CD4-positive, alpha-beta memory T cell (primary cell): ENCODE measurements at regions of chr16 and their contacts with region 1.

Region 1: DNA sequence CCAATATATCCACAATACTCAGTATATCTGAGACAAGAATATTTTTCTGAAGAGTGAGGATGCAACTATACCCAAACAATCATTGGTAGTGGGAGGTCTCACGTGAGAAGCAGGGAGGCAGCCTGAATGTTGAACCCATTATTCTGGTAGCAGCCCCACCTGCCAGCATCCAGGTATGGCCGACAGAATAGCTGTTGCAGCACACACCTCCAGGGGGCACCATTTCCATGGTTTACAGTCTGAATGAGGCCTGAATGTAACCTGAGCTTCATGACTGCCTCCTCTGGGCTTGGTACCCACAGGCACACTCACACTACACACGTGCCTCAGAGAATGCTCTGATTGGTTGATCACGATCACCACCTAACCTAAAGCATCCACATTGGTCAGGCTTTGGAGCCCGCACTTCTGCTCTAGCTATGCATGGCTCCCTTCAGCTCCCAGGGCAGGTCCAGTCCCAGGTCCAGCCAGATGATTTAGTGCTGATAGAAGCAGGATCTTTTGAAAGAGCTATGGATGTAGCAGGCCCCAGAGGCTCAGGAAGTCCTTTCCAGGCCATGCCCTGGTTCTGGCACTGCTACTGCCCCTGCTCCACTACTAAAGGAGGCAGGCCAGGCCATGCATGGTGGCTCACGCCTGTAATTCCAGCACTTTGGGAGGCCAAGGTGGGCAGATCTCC is 11.0 kb upstream of the CBFB start:
- DNase-seq: peak; percentile 82 to 88 (median 86)
- H3K4me3 ChIP-seq: no peak overlapping the region
- H3K4me3 Mint-ChIP-seq: peak overlapping the region in 2 of 8 donors; percentile 3 to 21
- H3K27ac ChIP-seq: no peak overlapping the region
- H3K27ac Mint-ChIP-seq: peak overlapping the region in 4 of 7 donors; percentile 24 to 77 (median 56)
- H3K4me1 ChIP-seq: peaks cover 13% of the 10 kb centered on the region
- H3K4me1 Mint-ChIP-seq: peaks cover 2 to 19% (median 8%) of the 10 kb centered on the region in 4 donors
- H3K27me3 ChIP-seq: no peaks in the 10 kb centered on the region
- H3K27me3 Mint-ChIP-seq: no peaks in the 10 kb centered on the region

Region 2: DNA sequence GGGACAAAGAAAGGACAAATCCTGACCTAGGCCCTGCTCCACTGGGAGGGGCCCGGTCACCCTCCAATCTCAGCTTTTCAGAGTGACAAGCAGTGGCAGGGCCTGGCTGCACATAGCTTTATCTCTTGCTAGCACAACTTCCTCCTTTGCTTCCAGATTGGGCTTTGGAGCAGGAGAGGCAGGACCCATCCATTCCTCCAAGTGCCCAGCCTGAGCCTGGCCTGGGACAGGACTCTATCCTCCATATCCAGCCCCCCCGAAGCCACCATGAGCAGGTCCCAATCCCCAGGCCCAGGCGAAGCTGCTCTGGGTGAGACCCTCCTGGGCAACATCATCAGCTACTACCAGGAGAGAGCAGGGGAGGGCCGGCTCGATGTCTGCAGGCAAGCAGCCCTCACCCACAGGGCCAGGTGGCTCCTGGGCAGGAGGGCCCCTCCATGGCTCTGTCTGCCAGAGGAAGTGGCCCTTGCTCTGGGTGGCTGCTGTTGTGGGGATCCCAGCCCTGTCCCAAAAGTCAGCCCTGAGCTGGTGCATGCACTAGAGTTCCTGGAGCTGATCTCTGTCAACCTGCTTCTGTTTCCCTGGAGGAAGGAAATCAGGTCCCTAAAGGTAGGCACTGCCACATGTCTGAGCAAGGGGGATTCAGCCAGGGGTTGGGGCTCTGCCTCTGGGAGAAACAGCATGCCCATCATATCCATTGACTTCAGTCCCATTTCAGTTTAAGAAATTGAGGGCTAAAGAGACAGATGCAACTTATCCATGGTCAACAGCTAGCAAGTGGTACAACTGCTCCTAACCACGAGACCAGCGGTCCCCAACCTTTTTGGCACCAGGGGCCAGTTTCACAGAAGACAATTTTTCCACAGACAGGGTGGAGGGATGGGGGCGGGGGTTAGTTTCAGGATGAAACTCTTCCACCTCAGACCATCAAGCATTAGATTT is 526.9 kb before region 1 on chr16:
- CTCF ChIA-PET with region 1: no interaction called
- POLR2A ChIA-PET with region 1: no interaction called
- intact Hi-C with region 1: no loop called
- DNase-seq: no peak
- H3K4me3 ChIP-seq: no peak overlapping the region
- H3K4me3 Mint-ChIP-seq: peak overlapping the region in 1 of 8 donors; percentile 36
- H3K27ac ChIP-seq: no peak overlapping the region
- H3K27ac Mint-ChIP-seq: peak overlapping the region in 3 of 7 donors; percentile 2 to 30 (median 18)
- H3K4me1 ChIP-seq: no peaks in the 10 kb centered on the region
- H3K4me1 Mint-ChIP-seq: peaks cover 0 to 2% (median 0%) of the 10 kb centered on the region in 4 donors
- H3K27me3 ChIP-seq: no peaks in the 10 kb centered on the region
- H3K27me3 Mint-ChIP-seq: peaks cover 0 to 2% of the 10 kb centered on the region in 2 donors

Region 3: DNA sequence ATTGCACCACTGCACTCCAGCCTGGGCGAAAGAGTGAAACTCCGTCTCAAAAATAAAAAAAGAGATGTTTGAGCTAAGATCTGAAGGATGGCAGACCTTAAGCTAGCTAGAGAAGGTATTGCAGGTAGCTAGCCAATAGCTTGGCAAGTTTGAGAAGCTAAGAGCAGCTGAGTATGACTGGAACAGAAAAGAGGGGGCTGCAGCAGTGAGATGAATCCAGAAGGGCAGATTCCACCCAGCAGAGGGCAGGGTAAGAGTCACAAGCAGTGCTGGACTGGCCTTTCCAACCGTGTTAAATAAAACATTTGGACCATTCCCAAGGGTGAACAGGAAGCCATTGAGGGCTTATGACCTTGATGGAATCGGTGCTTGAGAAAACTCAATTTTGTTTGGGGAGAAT is 86.1 kb after region 1 on chr16:
- CTCF ChIA-PET with region 1: interaction called, 72 read pairs
- POLR2A ChIA-PET with region 1: interaction called, 4 read pairs
- intact Hi-C with region 1: loop called (anchors 1 kb)
- DNase-seq: no peak
- H3K4me3 ChIP-seq: no peak overlapping the region
- H3K4me3 Mint-ChIP-seq: no peak overlapping the region
- H3K27ac ChIP-seq: no peak overlapping the region
- H3K27ac Mint-ChIP-seq: peak overlapping the region in 3 of 7 donors; percentile 7 to 47 (median 19)
- H3K4me1 ChIP-seq: peaks cover 3% of the 10 kb centered on the region
- H3K4me1 Mint-ChIP-seq: peaks cover 0 to 6% (median 0%) of the 10 kb centered on the region in 4 donors
- H3K27me3 ChIP-seq: no peaks in the 10 kb centered on the region
- H3K27me3 Mint-ChIP-seq: no peaks in the 10 kb centered on the region

Region 4: GRCh38 chr16:67173808-67174705 is 156.1 kb after region 1 on chr16:
- CTCF ChIA-PET with region 1: interaction called, 14 read pairs
- POLR2A ChIA-PET with region 1: no interaction called
- intact Hi-C with region 1: no loop called
- DNase-seq: peak; percentile 61 to 78 (median 64)
- H3K4me3 ChIP-seq: peak overlapping the region; percentile 29 to 68
- H3K4me3 Mint-ChIP-seq: peak overlapping the region; percentile 81 to 95 (median 88)
- H3K27ac ChIP-seq: peak overlapping the region; percentile 20
- H3K27ac Mint-ChIP-seq: peak overlapping the region; percentile 61 to 96 (median 78)
- H3K4me1 ChIP-seq: peaks cover 49% of the 10 kb centered on the region
- H3K4me1 Mint-ChIP-seq: peaks cover 26 to 66% (median 37%) of the 10 kb centered on the region in 4 donors
- H3K27me3 ChIP-seq: peaks cover 14% of the 10 kb centered on the region
- H3K27me3 Mint-ChIP-seq: peaks cover 5 to 18% of the 10 kb centered on the region in 2 donors